Breast epithelium (tissue), 4 donors: ENCODE measurements at regions of chr19 and their contacts with region 1.

Region 1: GRCh38 chr19:23470873-23471545 is 75.7 kb upstream of the ZNF91 start:
- DNase-seq: no peak
- H3K4me3 ChIP-seq: peak overlapping the region in 2 of 3 donors; percentile 46 to 64
- H3K27ac ChIP-seq: no peak overlapping the region
- H3K4me1 ChIP-seq: no peaks in the 10 kb centered on the region
- H3K27me3 ChIP-seq: peaks cover 0 to 4% of the 10 kb centered on the region in 2 donors
- CTCF ChIP-seq: no peak
- POLR2A ChIP-seq: no peak

Region 2: GRCh38 chr19:23321948-23322549 is 149.0 kb before region 1 on chr19:
- intact Hi-C with region 1: loop called (anchors 2 kb)
- DNase-seq: no peak
- H3K4me3 ChIP-seq: no peak overlapping the region
- H3K27ac ChIP-seq: no peak overlapping the region
- H3K4me1 ChIP-seq: no peaks in the 10 kb centered on the region
- H3K27me3 ChIP-seq: no peaks in the 10 kb centered on the region
- CTCF ChIP-seq: no peak
- POLR2A ChIP-seq: no peak

Region 3: DNA sequence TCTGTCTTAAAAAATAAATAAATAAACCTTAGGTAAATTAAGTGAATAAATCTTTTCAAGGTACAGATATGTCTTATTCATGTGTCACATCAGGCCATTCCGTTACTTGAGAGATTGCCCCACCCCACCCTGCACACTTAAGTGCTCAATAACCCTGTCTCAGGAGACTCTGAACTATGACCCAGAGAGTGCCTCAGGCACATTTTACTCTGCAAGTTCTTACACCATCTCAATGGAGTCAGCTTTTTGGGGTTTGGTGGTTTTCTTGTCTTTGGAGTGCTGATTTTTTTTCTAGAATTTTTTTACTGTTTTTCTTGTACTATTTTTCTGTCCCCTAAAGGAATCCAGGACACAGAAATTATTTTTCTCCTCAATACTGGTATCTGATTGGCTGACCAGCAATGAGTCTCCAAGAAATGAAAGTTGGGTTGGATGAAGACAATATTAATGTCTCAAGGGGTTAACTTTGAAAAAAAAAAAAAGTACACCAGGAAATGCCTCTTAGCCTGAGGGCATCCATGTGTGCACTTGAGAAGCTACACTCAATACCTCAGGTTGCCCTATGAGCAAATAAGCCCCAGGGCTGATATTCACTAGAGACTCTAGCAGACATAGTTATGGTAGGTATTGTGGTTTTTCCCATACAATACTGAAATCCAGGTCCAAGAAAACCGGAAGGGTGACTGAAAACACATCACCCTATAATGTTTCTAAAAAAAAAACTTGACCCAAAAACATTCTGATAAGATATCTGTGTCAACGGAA is 38.9 kb after region 1 on chr19:
- intact Hi-C with region 1: no loop called
- DNase-seq: no peak
- H3K4me3 ChIP-seq: no peak overlapping the region
- H3K27ac ChIP-seq: no peak overlapping the region
- H3K4me1 ChIP-seq: no peaks in the 10 kb centered on the region
- H3K27me3 ChIP-seq: no peaks in the 10 kb centered on the region
- CTCF ChIP-seq: no peak
- POLR2A ChIP-seq: no peak